ENCODE measurements at regions of chr14 and their contacts with region 1.

Region 1: GRCh38 chr14:68795597-68796417 is 2.9 kb upstream of the ZFP36L1 start:
- DNase-seq: peak; percentile 66 to 90 (median 86)
- H3K4me3 ChIP-seq: peak overlapping the region; percentile 99
- H3K4me3 Mint-ChIP-seq: peak overlapping the region; percentile 91 to 98 (median 97)
- H3K27ac ChIP-seq: peak overlapping the region; percentile 99
- H3K27ac Mint-ChIP-seq: peak overlapping the region; percentile 98 to 100 (median 100)
- H3K4me1 ChIP-seq: peaks cover 16% of the 10 kb centered on the region
- H3K4me1 Mint-ChIP-seq: peaks cover 25 to 43% (median 39%) of the 10 kb centered on the region in 3 donors
- H3K27me3 ChIP-seq: no peaks in the 10 kb centered on the region
- H3K27me3 Mint-ChIP-seq: peaks cover 0 to 18% of the 10 kb centered on the region in 2 donors

Region 2: DNA sequence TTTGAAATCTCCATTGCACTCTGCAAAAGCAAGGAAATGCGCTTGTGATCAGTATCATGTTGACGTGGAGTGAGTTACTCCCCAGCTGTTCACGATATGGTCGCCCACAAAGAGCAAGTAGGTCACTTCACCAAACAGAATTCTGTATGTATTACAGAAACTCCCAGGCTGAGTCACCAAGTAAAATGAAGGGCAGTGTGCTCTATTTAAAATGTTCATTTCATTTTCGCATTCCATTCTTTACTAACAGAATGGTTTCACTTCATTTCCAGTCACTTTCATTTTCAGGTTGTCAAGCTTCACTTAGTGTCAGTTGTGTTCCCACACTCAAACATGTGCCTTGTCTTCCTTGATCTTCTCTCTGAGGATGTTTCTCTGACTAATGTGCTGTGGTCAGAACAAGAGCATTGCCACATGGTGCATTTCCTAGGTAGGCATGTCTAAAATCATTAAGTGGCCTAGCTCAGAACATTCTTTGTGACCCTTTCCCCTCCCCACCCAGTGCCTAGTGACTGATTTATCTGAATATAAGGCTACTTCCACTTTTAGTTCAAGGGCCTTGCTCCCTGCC is 585.0 kb before region 1 on chr14:
- CTCF ChIA-PET with region 1: interaction called, 3 read pairs
- POLR2A ChIA-PET with region 1: interaction called, 10 read pairs
- DNase-seq: peak; percentile 22 to 64 (median 34)
- H3K4me3 ChIP-seq: peak overlapping the region; percentile 43
- H3K4me3 Mint-ChIP-seq: peak overlapping the region; percentile 78 to 87 (median 85)
- H3K27ac ChIP-seq: peak overlapping the region; percentile 49
- H3K27ac Mint-ChIP-seq: peak overlapping the region; percentile 86 to 97 (median 94)
- H3K4me1 ChIP-seq: peaks cover 46% of the 10 kb centered on the region
- H3K4me1 Mint-ChIP-seq: peaks cover 64 to 76% (median 72%) of the 10 kb centered on the region in 3 donors
- H3K27me3 ChIP-seq: no peaks in the 10 kb centered on the region
- H3K27me3 Mint-ChIP-seq: no peaks in the 10 kb centered on the region

Region 3: GRCh38 chr14:68248481-68249255 is 547.1 kb before region 1 on chr14:
- CTCF ChIA-PET with region 1: interaction called, 85 read pairs
- POLR2A ChIA-PET with region 1: interaction called, 7 read pairs
- DNase-seq: peak in 2 of 5 donors; percentile 39 to 57
- H3K4me3 ChIP-seq: no peak overlapping the region
- H3K4me3 Mint-ChIP-seq: no peak overlapping the region
- H3K27ac ChIP-seq: no peak overlapping the region
- H3K27ac Mint-ChIP-seq: peak overlapping the region in 3 of 8 donors; percentile 15 to 60 (median 52)
- H3K4me1 ChIP-seq: peaks cover 12% of the 10 kb centered on the region
- H3K4me1 Mint-ChIP-seq: peaks cover 8 to 17% (median 14%) of the 10 kb centered on the region in 3 donors
- H3K27me3 ChIP-seq: no peaks in the 10 kb centered on the region
- H3K27me3 Mint-ChIP-seq: no peaks in the 10 kb centered on the region

Region 4: GRCh38 chr14:68506021-68506644 is 289.7 kb before region 1 on chr14:
- CTCF ChIA-PET with region 1: no interaction called
- POLR2A ChIA-PET with region 1: interaction called, 19 read pairs
- DNase-seq: no peak
- H3K4me3 ChIP-seq: peak overlapping the region; percentile 35
- H3K4me3 Mint-ChIP-seq: peak overlapping the region in 6 of 7 donors; percentile 52 to 73 (median 69)
- H3K27ac ChIP-seq: no peak overlapping the region
- H3K27ac Mint-ChIP-seq: peak overlapping the region; percentile 74 to 96 (median 91)
- H3K4me1 ChIP-seq: peaks cover 69% of the 10 kb centered on the region
- H3K4me1 Mint-ChIP-seq: peaks cover 36 to 55% (median 44%) of the 10 kb centered on the region in 3 donors
- H3K27me3 ChIP-seq: no peaks in the 10 kb centered on the region
- H3K27me3 Mint-ChIP-seq: peaks cover 0 to 2% of the 10 kb centered on the region in 2 donors

Region 5: GRCh38 chr14:68685419-68686204 is 110.2 kb before region 1 on chr14:
- CTCF ChIA-PET with region 1: interaction called, 9 read pairs
- POLR2A ChIA-PET with region 1: interaction called, 17 read pairs
- DNase-seq: peak; percentile 66 to 94 (median 82)
- H3K4me3 ChIP-seq: no peak overlapping the region
- H3K4me3 Mint-ChIP-seq: peak overlapping the region; percentile 22 to 74 (median 50)
- H3K27ac ChIP-seq: peak overlapping the region; percentile 49
- H3K27ac Mint-ChIP-seq: peak overlapping the region; percentile 88 to 99 (median 98)
- H3K4me1 ChIP-seq: peaks cover 54% of the 10 kb centered on the region
- H3K4me1 Mint-ChIP-seq: peaks cover 58 to 68% (median 60%) of the 10 kb centered on the region in 3 donors
- H3K27me3 ChIP-seq: no peaks in the 10 kb centered on the region
- H3K27me3 Mint-ChIP-seq: no peaks in the 10 kb centered on the region

Region 6: GRCh38 chr14:68780358-68781160 is 15.2 kb before region 1 on chr14:
- CTCF ChIA-PET with region 1: interaction called, 88 read pairs
- POLR2A ChIA-PET with region 1: interaction called, 137 read pairs
- DNase-seq: peak in 3 of 5 donors; percentile 14 to 49 (median 21)
- H3K4me3 ChIP-seq: peak overlapping the region; percentile 57
- H3K4me3 Mint-ChIP-seq: peak overlapping the region; percentile 71 to 90 (median 85)
- H3K27ac ChIP-seq: peak overlapping the region; percentile 55
- H3K27ac Mint-ChIP-seq: peak overlapping the region; percentile 95 to 99 (median 98)
- H3K4me1 ChIP-seq: peaks cover 79% of the 10 kb centered on the region
- H3K4me1 Mint-ChIP-seq: peaks cover 78 to 95% (median 84%) of the 10 kb centered on the region in 3 donors
- H3K27me3 ChIP-seq: no peaks in the 10 kb centered on the region
- H3K27me3 Mint-ChIP-seq: no peaks in the 10 kb centered on the region

Region 7: DNA sequence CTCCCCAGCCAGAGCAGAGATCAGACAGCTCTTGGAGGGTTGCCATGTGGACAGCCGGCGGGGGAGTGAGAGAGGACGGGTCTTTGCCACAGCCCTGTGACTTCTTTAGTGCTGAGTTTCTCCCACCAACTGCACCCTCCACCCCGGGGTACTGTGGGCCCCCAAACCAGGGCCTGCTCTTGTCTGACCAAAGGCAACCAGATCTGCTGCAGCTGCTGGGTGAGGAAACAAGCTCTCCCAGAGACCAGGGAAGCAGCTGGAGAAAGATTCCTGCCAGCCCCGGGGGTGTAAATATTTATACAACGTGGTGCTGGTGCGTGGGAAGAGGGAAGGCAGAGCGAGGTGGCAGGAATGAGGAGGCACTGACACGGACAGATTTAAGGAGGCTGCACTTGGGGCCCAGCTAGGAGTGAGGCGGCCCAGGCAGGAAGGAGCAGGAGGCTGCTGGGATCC is 11.4 kb after region 1 on chr14:
- CTCF ChIA-PET with region 1: interaction called, 282 read pairs
- POLR2A ChIA-PET with region 1: interaction called, 445 read pairs
- DNase-seq: no peak
- H3K4me3 ChIP-seq: no peak overlapping the region
- H3K4me3 Mint-ChIP-seq: no peak overlapping the region
- H3K27ac ChIP-seq: no peak overlapping the region
- H3K27ac Mint-ChIP-seq: peak overlapping the region in 3 of 8 donors; percentile 12 to 52 (median 14)
- H3K4me1 ChIP-seq: peaks cover 19% of the 10 kb centered on the region
- H3K4me1 Mint-ChIP-seq: peaks cover 15 to 42% (median 17%) of the 10 kb centered on the region in 3 donors
- H3K27me3 ChIP-seq: no peaks in the 10 kb centered on the region
- H3K27me3 Mint-ChIP-seq: no peaks in the 10 kb centered on the region

Measured in CD8-positive, alpha-beta memory T cell (primary cell).